CD4-positive, alpha-beta T cell (primary cell): ENCODE measurements at regions of chr11 and their contacts with region 1.

Region 1: DNA sequence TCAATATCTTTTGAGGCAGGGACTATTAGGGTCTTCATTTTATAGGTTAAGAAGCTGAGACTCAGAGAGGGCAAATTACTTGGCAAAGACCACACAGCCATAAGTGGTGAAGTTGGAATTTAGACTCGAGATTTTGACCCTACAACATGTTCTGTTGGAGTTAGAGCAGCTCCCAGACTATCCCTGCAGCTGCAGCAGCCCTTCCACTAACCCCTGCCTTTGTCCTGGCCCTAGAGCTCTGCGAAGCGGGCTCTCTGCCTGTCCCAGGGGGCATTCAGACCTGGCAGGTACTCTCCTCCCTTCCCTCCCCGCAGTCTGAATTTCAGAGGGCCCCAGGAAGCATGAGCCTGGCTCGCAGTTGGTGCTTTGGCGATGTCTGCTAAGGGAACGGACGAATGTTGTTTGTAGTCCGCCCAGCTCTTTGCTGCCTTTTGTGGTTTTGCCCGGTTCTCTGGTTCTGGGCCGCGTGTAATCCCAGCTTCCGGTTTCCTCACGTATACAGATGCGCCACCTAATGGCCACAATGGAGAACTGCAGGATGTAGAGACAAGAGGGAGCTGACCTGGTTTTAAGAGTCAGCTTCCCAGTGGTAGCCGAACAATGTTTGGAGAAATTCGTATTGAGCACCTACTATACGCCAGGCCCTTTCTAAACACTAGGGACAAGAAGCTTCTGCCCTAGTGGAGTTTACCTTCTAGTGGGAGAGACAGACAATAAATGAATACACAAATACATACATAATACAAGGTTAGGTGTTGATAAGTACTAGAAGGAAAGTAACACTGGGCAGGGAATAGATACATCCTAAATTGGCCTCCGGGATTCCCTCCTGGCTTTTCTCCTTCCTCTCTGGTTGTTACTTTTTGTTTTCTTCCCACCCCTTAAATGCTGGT is 125.2 kb downstream of the ST3GAL4 start:
- DNase-seq: peak; percentile 42 to 87 (median 60)
- ATAC-seq: peak; percentile 83
- H3K4me3 ChIP-seq: peak overlapping the region; percentile 38
- H3K4me3 Mint-ChIP-seq: peak overlapping the region; percentile 30
- H3K27ac ChIP-seq: no peak overlapping the region
- H3K27ac Mint-ChIP-seq: peak overlapping the region; percentile 14
- H3K4me1 ChIP-seq: peaks cover 17% of the 10 kb centered on the region
- H3K4me1 Mint-ChIP-seq: peaks cover 21% of the 10 kb centered on the region
- H3K27me3 ChIP-seq: no peaks in the 10 kb centered on the region
- H3K27me3 Mint-ChIP-seq: no peaks in the 10 kb centered on the region
- CTCF ChIP-seq: peak; percentile 92

Region 2: GRCh38 chr11:125923012-125923579 is 557.6 kb before region 1 on chr11:
- CTCF ChIA-PET with region 1: no interaction called
- POLR2A ChIA-PET with region 1: no interaction called
- intact Hi-C with region 1: loop called in 1 of 2 experiments (anchors 2 kb)
- DNase-seq: peak; percentile 29 to 78 (median 42)
- ATAC-seq: peak; percentile 61
- H3K4me3 ChIP-seq: no peak overlapping the region
- H3K4me3 Mint-ChIP-seq: no peak overlapping the region
- H3K27ac ChIP-seq: no peak overlapping the region
- H3K27ac Mint-ChIP-seq: no peak overlapping the region
- H3K4me1 ChIP-seq: no peaks in the 10 kb centered on the region
- H3K4me1 Mint-ChIP-seq: no peaks in the 10 kb centered on the region
- H3K27me3 ChIP-seq: peaks cover 2 to 3% of the 10 kb centered on the region in 2 experiments
- H3K27me3 Mint-ChIP-seq: peaks cover 22% of the 10 kb centered on the region
- CTCF ChIP-seq: peak; percentile 79

Region 3: DNA sequence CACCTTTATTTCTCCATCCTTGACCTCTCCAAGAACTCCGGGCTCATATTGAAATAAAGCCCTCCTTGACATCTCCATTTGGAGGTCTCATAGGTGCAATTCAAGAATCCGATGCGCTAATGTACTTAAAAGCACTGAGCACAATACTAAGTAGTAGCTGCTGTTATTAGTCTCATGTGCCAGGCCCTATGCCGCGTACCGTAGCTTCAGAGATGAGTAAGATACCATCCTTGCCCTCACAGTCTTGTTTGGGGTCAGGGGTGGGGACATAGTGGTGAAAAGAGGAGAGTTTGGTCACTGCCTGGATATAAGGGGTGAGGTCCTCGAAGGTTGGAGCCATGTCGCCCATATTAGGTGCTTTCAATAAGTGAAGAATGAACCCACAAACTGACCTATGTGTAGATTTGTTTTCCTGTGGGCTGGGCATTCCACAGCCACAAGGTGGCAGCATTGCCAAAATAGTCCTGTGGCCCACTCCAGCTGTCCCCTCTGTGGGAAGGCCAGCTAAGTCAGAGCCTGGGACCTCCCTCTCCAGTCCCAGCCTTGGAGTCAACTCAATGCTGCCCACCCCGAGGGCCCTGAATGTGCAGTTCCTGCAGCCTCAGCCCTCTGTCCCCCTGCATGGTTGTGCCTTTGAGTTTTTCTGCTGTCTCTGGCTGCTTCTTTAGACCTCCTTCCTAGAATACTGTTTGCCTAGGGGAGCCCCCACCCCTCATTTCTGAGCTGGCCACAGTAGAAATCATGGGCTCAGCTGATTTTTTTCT is 170.2 kb before region 1 on chr11:
- CTCF ChIA-PET with region 1: interaction called, 12 read pairs
- POLR2A ChIA-PET with region 1: interaction called, 3 read pairs
- intact Hi-C with region 1: loop called (anchors 1 kb)
- DNase-seq: peak; percentile 30 to 72 (median 45)
- ATAC-seq: peak; percentile 55
- H3K4me3 ChIP-seq: no peak overlapping the region
- H3K4me3 Mint-ChIP-seq: no peak overlapping the region
- H3K27ac ChIP-seq: no peak overlapping the region
- H3K27ac Mint-ChIP-seq: peak overlapping the region; percentile 29
- H3K4me1 ChIP-seq: peaks cover 22% of the 10 kb centered on the region
- H3K4me1 Mint-ChIP-seq: peaks cover 45% of the 10 kb centered on the region
- H3K27me3 ChIP-seq: no peaks in the 10 kb centered on the region
- H3K27me3 Mint-ChIP-seq: no peaks in the 10 kb centered on the region
- CTCF ChIP-seq: peak; percentile 83

Region 4: GRCh38 chr11:126440792-126441514 is 39.7 kb before region 1 on chr11:
- CTCF ChIA-PET with region 1: interaction called, 25 read pairs
- POLR2A ChIA-PET with region 1: interaction called, 8 read pairs
- intact Hi-C with region 1: loop called (anchors 1 kb)
- DNase-seq: peak; percentile 47 to 83 (median 64)
- ATAC-seq: peak; percentile 66
- H3K4me3 ChIP-seq: no peak overlapping the region
- H3K4me3 Mint-ChIP-seq: no peak overlapping the region
- H3K27ac ChIP-seq: no peak overlapping the region
- H3K27ac Mint-ChIP-seq: no peak overlapping the region
- H3K4me1 ChIP-seq: peaks cover 6% of the 10 kb centered on the region
- H3K4me1 Mint-ChIP-seq: peaks cover 6% of the 10 kb centered on the region
- H3K27me3 ChIP-seq: peaks cover 0 to 7% of the 10 kb centered on the region in 2 experiments
- H3K27me3 Mint-ChIP-seq: peaks cover 6% of the 10 kb centered on the region
- CTCF ChIP-seq: peak; percentile 98